ENCODE measurements at regions of chr20 and their contacts with region 1.

Region 1: DNA sequence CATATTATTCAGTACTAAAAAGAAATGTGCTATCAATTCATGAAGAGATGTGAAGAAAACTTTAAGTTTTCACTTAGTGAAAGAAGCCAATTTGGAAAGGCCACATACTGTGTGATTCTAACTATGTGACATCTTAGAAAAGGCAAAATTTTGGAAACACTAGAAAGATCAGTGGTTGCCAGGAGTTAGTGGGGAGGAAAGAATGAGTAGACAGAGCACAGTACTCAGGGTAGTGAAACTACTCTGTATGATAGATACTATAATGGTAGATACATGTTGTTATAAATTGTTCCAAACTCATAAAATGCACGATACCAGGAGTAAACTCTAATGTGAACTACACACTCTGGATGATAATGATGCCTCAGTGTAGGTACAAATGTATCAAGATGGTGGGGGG is 14.2 kb downstream of the NCOA3 start:
- DNase-seq: no peak
- H3K4me3 ChIP-seq: no peak overlapping the region
- H3K27ac ChIP-seq: peak overlapping the region; percentile 13; the same call in 1 of the 2 replicates
- H3K4me1 ChIP-seq: peaks cover 10% of the 10 kb centered on the region; the same call in 1 of the 2 replicates
- H3K27me3 ChIP-seq: no peaks in the 10 kb centered on the region
- CTCF ChIP-seq: no peak

Region 2: GRCh38 chr20:47343007-47343472 is 172.8 kb before region 1 on chr20:
- CTCF ChIA-PET with region 1: no interaction called
- POLR2A ChIA-PET with region 1: no interaction called
- intact Hi-C with region 1: no loop called
- DNase-seq: no peak
- H3K4me3 ChIP-seq: no peak overlapping the region
- H3K27ac ChIP-seq: 0 out of 2 replicates have a peak overlapping the region, but pooled peaks have one; percentile 3
- H3K4me1 ChIP-seq: peaks cover 5% of the 10 kb centered on the region; the same call in 1 of the 2 replicates
- H3K27me3 ChIP-seq: no peaks in the 10 kb centered on the region
- CTCF ChIP-seq: no peak

Region 3: DNA sequence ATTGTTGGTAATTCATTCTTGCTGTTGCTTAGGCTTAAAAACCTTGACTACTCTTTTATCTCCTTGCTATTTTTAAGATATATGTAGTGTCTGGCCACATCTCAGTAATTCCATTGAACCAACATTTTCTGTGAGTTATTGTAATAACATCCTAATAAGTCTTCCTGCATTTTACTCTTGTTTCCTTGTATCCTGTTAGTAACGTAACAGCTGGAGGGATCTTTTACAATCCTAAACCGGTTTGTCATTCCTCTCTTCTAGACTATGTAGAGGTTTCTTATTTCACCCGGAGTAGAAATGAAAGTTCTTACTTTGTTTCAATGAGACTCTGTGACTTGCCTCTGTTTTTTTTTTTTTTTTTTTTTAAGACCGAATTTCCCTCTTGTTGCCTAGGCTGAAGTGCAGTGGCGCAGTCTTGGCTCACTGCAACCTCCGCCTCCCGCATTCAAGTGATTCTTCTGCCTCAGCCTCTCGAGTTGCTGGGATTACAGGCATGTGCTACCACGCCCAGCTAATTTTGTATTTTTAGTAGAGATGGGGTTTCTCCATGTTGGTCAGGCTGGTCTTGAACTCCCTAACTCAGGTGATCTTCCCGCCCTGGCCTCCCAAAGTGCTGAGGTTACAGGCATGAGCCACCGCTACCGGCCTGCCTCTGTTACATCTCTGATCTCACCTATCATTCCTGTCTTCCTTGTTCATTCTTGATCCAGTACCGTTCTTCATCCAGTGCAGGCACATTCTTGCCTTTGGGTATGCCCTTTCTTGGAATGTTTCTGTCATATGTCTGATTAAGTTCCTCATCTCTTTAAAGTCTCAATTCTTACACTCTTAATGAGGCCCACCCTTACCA is 30.6 kb after region 1 on chr20:
- CTCF ChIA-PET with region 1: no interaction called
- POLR2A ChIA-PET with region 1: interaction called, 10 read pairs
- intact Hi-C with region 1: no loop called
- DNase-seq: peak; percentile 30 to 82
- H3K4me3 ChIP-seq: no peak overlapping the region
- H3K27ac ChIP-seq: peak overlapping the region; percentile 38
- H3K4me1 ChIP-seq: peaks cover 37% of the 10 kb centered on the region
- H3K27me3 ChIP-seq: no peaks in the 10 kb centered on the region
- CTCF ChIP-seq: no peak

Measured in PC-9 (cell line).